ENCODE measurements at regions of chr6 and their contacts with region 1.

Region 1: GRCh38 chr6:109009236-109009961 is 85.2 kb downstream of the SESN1 start:
- DNase-seq: peak; percentile 98
- H3K4me3 Mint-ChIP-seq: peak overlapping the region; percentile 93
- H3K27ac Mint-ChIP-seq: peak overlapping the region; percentile 92
- H3K4me1 Mint-ChIP-seq: peaks cover 35% of the 10 kb centered on the region
- H3K27me3 Mint-ChIP-seq: peaks cover 2% of the 10 kb centered on the region

Region 2: GRCh38 chr6:108848116-108848868 is 161.1 kb before region 1 on chr6 and contains the start of gene ARMC2:
- intact Hi-C with region 1: loop called (anchors 2 kb)
- DNase-seq: peak; percentile 97
- H3K4me3 Mint-ChIP-seq: peak within 1 kb of the TSS; percentile 85
- H3K27ac Mint-ChIP-seq: peak within 1 kb of the TSS; percentile 74
- H3K4me1 Mint-ChIP-seq: peaks cover 19% of the 10 kb centered on the region
- H3K27me3 Mint-ChIP-seq: peaks cover 21% of the 10 kb centered on the region
- total RNA-seq, gene ARMC2: 2.7 and 3.3 TPM in 2 replicates

Region 3: GRCh38 chr6:108883172-108883571 is 126.2 kb before region 1 on chr6:
- intact Hi-C with region 1: loop called (anchors 1 kb)
- DNase-seq: no peak
- H3K4me3 Mint-ChIP-seq: peak overlapping the region; percentile 24
- H3K27ac Mint-ChIP-seq: peak overlapping the region; percentile 87
- H3K4me1 Mint-ChIP-seq: peaks cover 31% of the 10 kb centered on the region
- H3K27me3 Mint-ChIP-seq: peaks cover 28% of the 10 kb centered on the region

Region 4: DNA sequence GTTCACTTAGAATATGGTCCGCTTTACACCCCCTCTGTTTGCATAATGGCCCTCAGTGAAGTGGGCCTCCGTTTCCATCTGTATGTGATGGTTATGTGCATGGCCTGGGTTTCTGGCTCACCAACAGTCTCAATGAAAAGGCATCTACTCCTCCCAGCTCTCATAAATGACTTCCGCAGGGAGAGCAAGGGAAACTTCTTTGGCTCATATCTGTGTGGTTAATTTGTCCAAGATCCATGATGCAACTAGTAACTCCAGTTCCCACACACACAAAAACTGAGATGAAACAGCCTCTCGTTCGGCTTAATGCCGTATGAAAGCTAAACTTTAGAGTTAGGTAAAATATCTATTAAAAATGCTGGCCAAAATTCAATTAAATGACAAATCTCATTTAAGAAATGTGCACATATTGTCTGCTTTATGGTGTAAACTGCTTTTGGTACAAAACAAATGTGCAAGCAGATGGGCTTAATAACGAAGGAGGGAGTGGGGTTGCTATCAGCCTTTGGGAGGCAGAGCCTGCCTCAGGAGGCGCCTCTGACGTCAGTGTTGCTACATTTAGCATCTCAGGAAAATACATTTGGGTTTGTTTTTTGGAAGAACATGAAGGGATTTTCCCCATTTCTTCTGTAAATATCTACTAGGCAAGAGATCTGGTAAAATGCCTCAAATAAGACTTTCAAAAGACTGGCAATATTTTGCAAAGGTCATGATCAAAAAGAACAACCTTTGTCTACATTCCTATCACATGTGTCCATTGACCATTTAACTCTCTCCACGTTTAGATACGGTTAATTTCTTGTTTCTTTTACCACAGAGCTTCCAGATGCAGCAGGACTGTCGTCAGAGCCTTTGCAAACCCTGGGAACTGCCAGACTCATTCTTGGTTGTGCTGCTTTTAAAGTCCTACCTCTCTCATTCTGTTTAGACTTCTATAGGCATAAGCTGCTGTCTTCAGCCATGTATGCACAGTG is 64.4 kb before region 1 on chr6:
- intact Hi-C with region 1: loop called (anchors 2 kb)
- DNase-seq: no peak
- H3K4me3 Mint-ChIP-seq: peak overlapping the region; percentile 27
- H3K27ac Mint-ChIP-seq: peak overlapping the region; percentile 34
- H3K4me1 Mint-ChIP-seq: peaks cover 57% of the 10 kb centered on the region
- H3K27me3 Mint-ChIP-seq: no peaks in the 10 kb centered on the region

Region 5: DNA sequence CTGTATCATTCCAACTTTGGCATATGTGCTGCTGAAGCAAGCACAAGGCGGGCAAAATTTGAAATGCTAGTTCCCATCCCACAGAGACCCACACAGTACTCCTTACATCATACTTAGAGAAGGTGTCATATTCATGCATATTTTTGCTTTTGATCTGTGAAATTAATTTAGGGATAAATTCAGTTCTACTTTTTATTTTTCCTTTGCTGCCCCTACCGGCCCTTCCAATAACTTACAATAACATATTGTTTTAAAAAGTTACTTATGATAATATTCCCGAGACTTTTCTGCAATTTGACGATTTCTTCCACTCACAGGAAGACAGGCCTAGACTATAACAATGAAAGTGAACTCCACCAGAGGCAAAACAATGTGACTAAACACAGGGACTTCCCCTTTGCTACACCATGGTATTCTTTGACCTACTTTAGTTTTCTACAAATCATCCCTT is 50.2 kb after region 1 on chr6:
- intact Hi-C with region 1: loop called (anchors 2 kb)
- DNase-seq: peak; percentile 64
- H3K4me3 Mint-ChIP-seq: no peak overlapping the region
- H3K27ac Mint-ChIP-seq: peak overlapping the region; percentile 5
- H3K4me1 Mint-ChIP-seq: peaks cover 9% of the 10 kb centered on the region
- H3K27me3 Mint-ChIP-seq: peaks cover 8% of the 10 kb centered on the region

Region 6: GRCh38 chr6:109095027-109095834 is 85.8 kb after region 1 on chr6 and contains the start of gene CEP57L1:
- intact Hi-C with region 1: loop called (anchors 1 kb)
- DNase-seq: peak; percentile 98
- H3K4me3 Mint-ChIP-seq: peak within 1 kb of the TSS; percentile 90
- H3K27ac Mint-ChIP-seq: peak within 1 kb of the TSS; percentile 100
- H3K4me1 Mint-ChIP-seq: peaks cover 53% of the 10 kb centered on the region
- H3K27me3 Mint-ChIP-seq: no peaks in the 10 kb centered on the region
- total RNA-seq, gene CEP57L1: 14.2 and 15.3 TPM in 2 replicates